Activated CD4-positive, alpha-beta T cell treated with anti-CD3 and anti-CD28 coated beads for 36 hours (primary cell): ENCODE measurements at regions of chr9 and their contacts with region 1.

Region 1: DNA sequence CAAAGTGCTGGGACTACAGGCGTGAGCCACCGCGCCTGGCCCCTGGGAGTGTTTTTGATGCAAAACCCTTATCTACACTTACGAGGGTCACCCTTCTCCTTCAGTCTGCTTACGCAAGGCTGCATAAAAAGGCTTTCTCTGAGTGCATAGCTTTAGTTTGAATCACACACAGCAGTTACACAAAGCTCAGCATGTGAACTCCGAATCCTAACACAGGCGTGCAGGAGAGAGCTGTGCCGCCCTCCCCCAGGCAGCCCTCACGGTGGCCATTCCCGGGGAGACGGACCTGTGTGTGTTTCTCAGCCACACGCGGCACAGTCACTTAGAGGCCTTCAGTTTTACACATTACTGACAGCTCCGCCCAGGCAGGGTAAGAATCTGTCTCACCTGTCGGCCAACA is 26.7 kb downstream of the EXD3 start:
- DNase-seq: no peak
- ATAC-seq: no peak
- H3K4me3 Mint-ChIP-seq: no peak overlapping the region
- H3K27ac Mint-ChIP-seq: no peak overlapping the region
- H3K4me1 Mint-ChIP-seq: peaks cover 20% of the 10 kb centered on the region
- H3K27me3 Mint-ChIP-seq: no peaks in the 10 kb centered on the region

Region 2: DNA sequence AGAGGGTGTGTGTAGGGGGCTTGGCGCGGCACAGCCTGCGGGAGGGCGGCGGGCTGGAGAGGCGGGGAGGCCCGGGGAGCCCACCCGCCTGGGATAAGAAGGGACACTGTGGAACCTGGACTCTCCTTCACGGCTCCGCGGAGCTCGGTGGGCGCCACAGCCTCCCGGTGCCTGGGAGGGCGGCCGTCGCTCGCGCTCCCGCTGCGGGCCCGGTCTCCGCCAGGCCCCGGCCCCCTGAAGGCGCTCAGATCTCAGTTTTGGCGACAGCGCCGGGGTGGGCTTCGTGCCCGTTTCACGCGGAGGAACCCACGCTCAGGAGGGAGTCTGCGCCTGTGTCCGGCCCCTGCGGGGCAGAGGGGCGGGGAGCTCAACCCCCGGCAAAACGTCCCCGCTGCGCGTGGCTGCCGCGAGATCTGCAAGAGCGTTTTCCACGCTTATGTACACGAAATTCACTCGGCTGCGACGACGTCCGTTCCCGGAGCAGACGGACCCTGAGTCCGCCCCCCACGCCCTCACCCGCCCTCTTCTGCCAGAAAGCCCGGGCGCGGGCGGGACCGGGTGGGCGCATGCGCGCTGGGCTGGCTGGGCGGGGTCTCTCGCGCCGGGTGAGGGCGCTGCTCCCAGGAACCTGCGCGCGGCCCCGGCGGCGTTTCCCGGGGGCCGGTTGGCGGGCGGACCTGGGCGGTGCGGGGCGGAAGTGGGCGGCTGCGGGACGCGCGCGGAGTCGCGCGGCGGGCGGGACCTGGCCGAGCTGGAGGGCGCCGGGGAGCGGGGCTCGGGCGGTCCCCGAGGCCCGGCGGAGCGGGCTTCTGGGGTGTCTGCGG is 141.4 kb before region 1 on chr9 and contains the start of gene NELFB:
- CTCF ChIA-PET with region 1: no interaction called
- POLR2A ChIA-PET with region 1: no interaction called
- intact Hi-C with region 1: no loop called
- DNase-seq: peak; percentile 97
- ATAC-seq: peak; percentile 94
- H3K4me3 Mint-ChIP-seq: peak within 1 kb of the TSS; percentile 87
- H3K27ac Mint-ChIP-seq: peak within 1 kb of the TSS; percentile 81
- H3K4me1 Mint-ChIP-seq: peaks cover 18% of the 10 kb centered on the region
- H3K27me3 Mint-ChIP-seq: no peaks in the 10 kb centered on the region
- total RNA-seq, gene NELFB: 41.4 to 54.1 TPM

Region 3: GRCh38 chr9:137326445-137327065 is 69.7 kb before region 1 on chr9:
- CTCF ChIA-PET with region 1: no interaction called
- POLR2A ChIA-PET with region 1: no interaction called
- intact Hi-C with region 1: loop called in 1 of 2 experiments (anchors 5 kb)
- DNase-seq: no peak
- ATAC-seq: peak; percentile 79
- H3K4me3 Mint-ChIP-seq: peak overlapping the region; percentile 24
- H3K27ac Mint-ChIP-seq: peak overlapping the region; percentile 44
- H3K4me1 Mint-ChIP-seq: peaks cover 9% of the 10 kb centered on the region
- H3K27me3 Mint-ChIP-seq: peaks cover 10% of the 10 kb centered on the region

Region 4: DNA sequence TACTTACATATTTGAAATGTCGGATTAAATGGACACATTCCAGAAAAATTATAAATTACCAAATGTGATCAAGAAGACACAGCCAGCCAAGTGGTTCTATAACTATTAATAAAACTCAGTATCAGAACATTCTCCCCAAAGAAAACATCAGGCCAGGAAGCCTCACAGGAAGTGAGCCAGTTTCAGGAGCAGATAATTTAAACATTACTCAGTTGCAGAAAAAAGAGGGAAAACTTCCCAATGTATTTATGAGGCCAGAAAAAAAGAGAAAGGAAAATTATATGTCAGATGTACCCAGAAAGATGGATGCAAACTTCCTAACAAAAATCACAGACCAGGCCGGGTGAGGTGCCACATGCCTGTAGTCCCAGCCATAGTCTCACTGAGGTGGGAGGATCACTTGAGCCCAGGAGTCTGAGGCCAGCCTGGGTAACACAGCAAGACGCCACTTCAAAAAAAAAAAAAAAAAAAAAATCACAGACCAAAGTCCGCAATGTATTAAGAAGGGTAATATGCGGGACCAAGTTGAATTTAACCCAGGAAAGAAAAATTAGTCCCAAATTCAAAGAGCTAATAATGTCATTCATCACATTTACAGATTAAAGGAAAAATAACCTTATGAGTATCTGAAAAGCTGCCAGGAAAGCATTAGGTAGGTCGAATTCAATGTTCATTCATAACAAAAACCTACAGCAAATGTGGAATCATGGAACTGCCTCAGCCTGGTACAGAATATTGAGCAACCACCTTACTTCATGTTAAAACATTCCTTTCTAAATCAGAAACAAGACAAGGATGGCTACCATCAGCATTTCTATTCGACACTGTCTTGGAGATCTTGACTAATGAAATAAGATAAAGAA is 57.0 kb before region 1 on chr9:
- CTCF ChIA-PET with region 1: no interaction called
- POLR2A ChIA-PET with region 1: no interaction called
- intact Hi-C with region 1: no loop called
- DNase-seq: no peak
- ATAC-seq: no peak
- H3K4me3 Mint-ChIP-seq: no peak overlapping the region
- H3K27ac Mint-ChIP-seq: no peak overlapping the region
- H3K4me1 Mint-ChIP-seq: peaks cover 4% of the 10 kb centered on the region
- H3K27me3 Mint-ChIP-seq: no peaks in the 10 kb centered on the region